IMR-90 (cell line): ENCODE measurements at regions of chr5 and their contacts with region 1.

Region 1: GRCh38 chr5:431001-431710 is 11.8 kb upstream of the EXOC3 start:
- DNase-seq: peak; percentile 48
- ATAC-seq: peak; percentile 50
- H3K4me3 ChIP-seq: no peak overlapping the region
- H3K27ac ChIP-seq: no peak overlapping the region
- H3K4me1 ChIP-seq: peaks cover 10% of the 10 kb centered on the region
- H3K27me3 ChIP-seq: no peaks in the 10 kb centered on the region
- CTCF ChIP-seq: peak; percentile 61
- POLR2A ChIP-seq: no peak
- RAD21 ChIP-seq: peak; percentile 74

Region 2: GRCh38 chr5:310941-311434 is 120.2 kb before region 1 on chr5:
- CTCF ChIA-PET with region 1: no interaction called
- POLR2A ChIA-PET with region 1: no interaction called
- dilution Hi-C with region 1: no loop called
- in situ Hi-C with region 1: loop called (anchors 5 kb)
- intact Hi-C with region 1: no loop called
- DNase-seq: peak; percentile 65
- ATAC-seq: 0 out of 2 replicates have a peak, but pooled peaks have one; percentile 8
- H3K4me3 ChIP-seq: no peak overlapping the region
- H3K27ac ChIP-seq: no peak overlapping the region
- H3K4me1 ChIP-seq: peaks cover 1% of the 10 kb centered on the region; the same call in 1 of the 2 replicates
- H3K27me3 ChIP-seq: no peaks in the 10 kb centered on the region
- CTCF ChIP-seq: no peak
- POLR2A ChIP-seq: no peak
- RAD21 ChIP-seq: no peak

Region 3: GRCh38 chr5:322281-322941 is 108.7 kb before region 1 on chr5:
- CTCF ChIA-PET with region 1: no interaction called
- POLR2A ChIA-PET with region 1: no interaction called
- dilution Hi-C with region 1: no loop called
- in situ Hi-C with region 1: no loop called
- intact Hi-C with region 1: loop called (anchors 1 kb)
- DNase-seq: peak; percentile 36
- ATAC-seq: peak; percentile 40
- H3K4me3 ChIP-seq: peak overlapping the region; percentile 98
- H3K27ac ChIP-seq: peak overlapping the region; percentile 84
- H3K4me1 ChIP-seq: peaks cover 19% of the 10 kb centered on the region
- H3K27me3 ChIP-seq: no peaks in the 10 kb centered on the region
- CTCF ChIP-seq: no peak
- POLR2A ChIP-seq: no peak; the same call in none of the 2 replicates
- RAD21 ChIP-seq: no peak